ENCODE measurements at regions of chr12 and their contacts with region 1.

Region 1: DNA sequence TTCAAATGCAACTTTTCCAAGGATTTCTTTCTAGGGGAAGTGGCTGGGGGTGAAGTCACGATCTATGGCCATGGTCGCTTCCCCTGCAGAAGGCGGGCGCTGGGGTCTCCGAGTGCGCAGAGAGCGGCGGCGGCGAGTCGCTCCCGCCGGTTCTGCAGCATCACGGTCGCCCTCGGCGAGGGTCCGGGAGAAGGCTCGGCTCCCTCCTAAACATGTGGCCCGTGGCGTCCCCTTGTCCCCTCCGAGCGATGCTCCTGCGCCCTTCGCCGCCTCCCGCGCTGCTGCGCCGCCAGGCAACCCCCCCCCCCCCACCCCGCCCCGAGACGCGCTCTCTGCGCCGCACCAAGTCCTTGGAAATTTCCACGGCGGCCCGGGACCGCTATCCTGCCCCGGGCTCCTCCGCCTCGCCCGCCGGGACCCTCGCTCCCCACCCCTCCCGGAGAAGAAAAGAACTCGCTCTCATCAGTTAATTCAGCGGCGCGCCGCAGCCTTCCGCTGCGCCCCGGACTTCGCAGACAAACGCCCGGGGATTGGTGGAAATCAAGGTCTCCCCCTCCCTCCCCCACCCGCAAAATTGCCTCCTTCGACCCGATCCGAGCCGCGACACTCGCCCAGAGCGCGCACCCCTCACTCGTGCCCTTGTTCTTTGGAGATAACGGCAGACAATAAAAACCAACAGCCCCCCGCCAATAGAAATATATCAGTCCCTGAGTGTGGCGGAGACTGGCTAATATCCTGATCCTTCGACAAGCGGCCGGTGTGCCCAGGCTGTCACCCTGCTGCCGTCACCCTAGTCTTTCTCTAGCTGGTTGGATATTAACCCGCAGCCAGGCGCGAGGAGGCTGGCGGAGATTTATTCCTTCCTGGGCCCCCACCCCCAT is at the start of gene ST8SIA1:
- DNase-seq: peak; percentile 50 to 88 (median 60)
- ATAC-seq: peak; percentile 53
- H3K4me3 ChIP-seq: peak within 1 kb of the TSS; percentile 86
- H3K4me3 Mint-ChIP-seq: peak within 1 kb of the TSS; percentile 95
- H3K27ac ChIP-seq: peak within 1 kb of the TSS; percentile 45 to 74
- H3K27ac Mint-ChIP-seq: peak within 1 kb of the TSS; percentile 92
- H3K4me1 ChIP-seq: peaks cover 25% of the 10 kb centered on the region
- H3K4me1 Mint-ChIP-seq: peaks cover 52% of the 10 kb centered on the region
- H3K27me3 ChIP-seq: peaks cover 0 to 8% of the 10 kb centered on the region in 2 experiments
- H3K27me3 Mint-ChIP-seq: peaks cover 39% of the 10 kb centered on the region
- CTCF ChIP-seq: no peak
- total RNA-seq, gene ST8SIA1: 5.6 to 5.7 TPM

Region 2: DNA sequence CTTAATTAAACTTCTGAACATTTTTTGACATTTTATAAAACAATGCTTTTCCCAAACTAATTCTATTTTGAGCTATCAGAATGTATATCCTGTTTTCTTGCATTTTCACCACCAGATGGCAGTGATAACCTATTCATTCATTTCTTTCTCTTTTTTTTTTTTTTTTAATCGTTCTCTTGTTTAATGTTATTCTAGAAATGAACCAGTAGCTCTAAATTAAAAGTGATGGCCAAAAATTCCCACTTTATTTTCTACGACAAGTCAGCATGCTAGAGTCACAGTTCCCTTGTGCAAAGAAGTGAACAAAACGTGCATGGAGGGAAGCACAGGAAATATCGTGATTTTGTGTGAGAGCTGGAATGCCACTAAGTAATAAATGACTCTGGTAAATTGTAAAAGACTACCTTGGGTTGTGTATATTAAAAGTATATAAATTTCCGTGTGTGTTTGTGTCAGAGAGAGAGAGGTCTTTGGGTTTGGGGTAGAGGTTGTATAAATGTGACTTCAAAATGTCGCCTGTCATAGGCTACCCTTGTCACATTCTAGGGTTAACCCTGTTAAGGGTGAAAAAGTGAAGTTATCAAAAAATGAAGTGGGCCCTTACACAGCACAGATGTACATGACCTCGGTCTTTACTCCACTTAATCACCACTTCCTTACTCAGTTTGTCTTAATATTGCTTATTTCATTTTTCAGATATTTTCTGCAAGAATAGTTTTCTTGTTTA is 636.6 kb before region 1 on chr12:
- CTCF ChIA-PET with region 1: no interaction called
- POLR2A ChIA-PET with region 1: interaction called, 4 read pairs
- intact Hi-C with region 1: loop called in 1 of 2 experiments (anchors 10 kb)
- DNase-seq: peak in 3 of 14 experiments; percentile 50 to 69 (median 69)
- ATAC-seq: no peak
- H3K4me3 ChIP-seq: no peak overlapping the region
- H3K4me3 Mint-ChIP-seq: peak overlapping the region; percentile 27
- H3K27ac ChIP-seq: no peak overlapping the region
- H3K27ac Mint-ChIP-seq: no peak overlapping the region
- H3K4me1 ChIP-seq: peaks cover 2% of the 10 kb centered on the region
- H3K4me1 Mint-ChIP-seq: peaks cover 27% of the 10 kb centered on the region
- H3K27me3 ChIP-seq: no peaks in the 10 kb centered on the region
- H3K27me3 Mint-ChIP-seq: peaks cover 5% of the 10 kb centered on the region
- CTCF ChIP-seq: peak; percentile 80

Region 3: DNA sequence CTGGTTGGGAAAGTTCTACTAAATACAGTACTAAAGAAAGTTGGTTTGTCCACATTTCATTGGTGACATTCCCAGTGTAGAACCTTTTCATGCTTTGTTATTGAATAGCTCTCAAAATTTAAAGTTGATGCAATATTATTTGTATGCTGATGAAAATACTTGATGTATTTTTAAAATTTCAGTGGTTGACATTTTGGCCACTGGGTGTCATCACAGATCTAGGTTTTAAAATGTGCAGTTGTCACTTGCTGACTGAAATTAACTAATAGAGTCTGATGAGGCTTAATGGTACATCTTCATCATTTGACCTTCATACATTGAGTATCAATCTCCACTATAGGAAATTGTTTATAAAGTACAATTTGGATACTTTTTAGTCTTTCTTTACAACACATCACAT is 251.5 kb before region 1 on chr12:
- CTCF ChIA-PET with region 1: no interaction called
- POLR2A ChIA-PET with region 1: interaction called, 3 read pairs
- intact Hi-C with region 1: loop called (anchors 1 to 5 kb)
- DNase-seq: peak in 7 of 14 experiments; percentile 8 to 71 (median 51)
- ATAC-seq: peak; percentile 55
- H3K4me3 ChIP-seq: no peak overlapping the region
- H3K4me3 Mint-ChIP-seq: no peak overlapping the region
- H3K27ac ChIP-seq: no peak overlapping the region
- H3K27ac Mint-ChIP-seq: no peak overlapping the region
- H3K4me1 ChIP-seq: no peaks in the 10 kb centered on the region
- H3K4me1 Mint-ChIP-seq: no peaks in the 10 kb centered on the region
- H3K27me3 ChIP-seq: no peaks in the 10 kb centered on the region
- H3K27me3 Mint-ChIP-seq: no peaks in the 10 kb centered on the region
- CTCF ChIP-seq: peak; percentile 70

Region 4: DNA sequence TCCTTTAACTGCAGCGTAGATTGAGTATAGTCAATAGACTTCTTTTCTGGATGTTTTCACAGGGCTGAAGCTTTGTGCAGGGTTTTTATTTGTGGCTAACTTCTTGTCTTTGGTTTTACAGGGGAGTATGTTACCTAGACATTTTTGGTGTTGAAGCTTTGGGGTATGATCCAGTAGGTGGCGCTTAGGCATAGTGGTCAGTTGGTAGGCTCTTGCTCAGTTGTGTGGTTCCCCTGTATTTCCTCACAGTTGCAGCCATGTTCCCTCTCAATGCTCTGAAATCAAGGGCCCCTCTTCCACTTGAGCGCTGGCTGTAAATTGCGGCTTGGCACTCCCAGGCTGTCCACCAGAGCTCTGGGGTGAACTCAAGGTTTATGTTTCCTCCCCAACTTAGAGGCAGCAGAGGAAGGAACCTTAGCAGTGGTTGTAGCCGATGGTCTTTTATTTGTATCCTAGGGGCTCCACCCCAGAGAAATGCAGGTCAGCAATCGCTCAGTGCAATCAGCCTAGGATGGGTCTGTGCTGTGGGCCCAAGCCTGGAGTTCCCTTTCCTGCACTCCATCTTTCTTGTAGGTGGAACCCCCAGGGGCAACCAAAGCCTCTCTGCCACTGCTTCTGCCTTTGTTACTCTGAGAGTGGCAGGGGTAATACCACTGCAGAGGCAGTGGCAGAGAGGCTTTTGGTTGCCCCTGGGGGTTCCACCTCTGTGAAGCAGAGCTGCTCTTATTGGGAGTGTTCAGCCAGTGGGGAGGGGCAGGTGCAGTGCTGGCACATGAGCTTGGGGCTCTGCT is 233.5 kb before region 1 on chr12:
- CTCF ChIA-PET with region 1: interaction called, 5 read pairs
- POLR2A ChIA-PET with region 1: interaction called, 3 read pairs
- intact Hi-C with region 1: loop called in 1 of 2 experiments (anchors 2 kb)
- DNase-seq: peak in 9 of 14 experiments; percentile 10 to 76 (median 33)
- ATAC-seq: peak; percentile 48
- H3K4me3 ChIP-seq: no peak overlapping the region
- H3K4me3 Mint-ChIP-seq: no peak overlapping the region
- H3K27ac ChIP-seq: no peak overlapping the region
- H3K27ac Mint-ChIP-seq: no peak overlapping the region
- H3K4me1 ChIP-seq: peaks cover 15% of the 10 kb centered on the region
- H3K4me1 Mint-ChIP-seq: peaks cover 14% of the 10 kb centered on the region
- H3K27me3 ChIP-seq: no peaks in the 10 kb centered on the region
- H3K27me3 Mint-ChIP-seq: no peaks in the 10 kb centered on the region
- CTCF ChIP-seq: peak; percentile 66

Region 5: GRCh38 chr12:22366181-22366580 is 31.5 kb after region 1 on chr12:
- CTCF ChIA-PET with region 1: no interaction called
- POLR2A ChIA-PET with region 1: no interaction called
- intact Hi-C with region 1: no loop called
- DNase-seq: no peak
- ATAC-seq: no peak
- H3K4me3 ChIP-seq: no peak overlapping the region
- H3K4me3 Mint-ChIP-seq: no peak overlapping the region
- H3K27ac ChIP-seq: no peak overlapping the region
- H3K27ac Mint-ChIP-seq: no peak overlapping the region
- H3K4me1 ChIP-seq: no peaks in the 10 kb centered on the region
- H3K4me1 Mint-ChIP-seq: no peaks in the 10 kb centered on the region
- H3K27me3 ChIP-seq: no peaks in the 10 kb centered on the region
- H3K27me3 Mint-ChIP-seq: no peaks in the 10 kb centered on the region
- CTCF ChIP-seq: no peak

Region 6: DNA sequence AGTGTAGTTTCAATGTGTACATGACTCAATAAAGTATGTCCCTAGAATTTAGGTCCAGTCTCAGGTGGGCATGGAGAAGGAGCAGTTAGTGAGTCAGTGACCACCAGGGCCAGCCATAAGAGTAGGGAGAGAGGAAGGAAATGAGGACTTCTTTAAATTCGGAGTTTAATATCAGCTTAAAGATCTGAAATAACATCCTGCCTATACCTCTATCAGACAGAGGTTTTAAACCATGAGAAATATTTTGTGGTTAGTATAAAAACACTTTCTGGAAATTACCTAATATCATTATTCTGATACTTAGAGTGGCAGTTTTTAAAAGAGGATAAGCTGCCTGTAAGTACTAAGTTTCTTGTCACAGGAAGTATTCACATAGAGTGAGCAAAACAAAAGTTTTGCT is 61.6 kb after region 1 on chr12:
- CTCF ChIA-PET with region 1: interaction called, 6 read pairs
- POLR2A ChIA-PET with region 1: interaction called, 25 read pairs
- intact Hi-C with region 1: loop called in 1 of 2 experiments (anchors 5 kb)
- DNase-seq: peak in 8 of 14 experiments; percentile 7 to 78 (median 30)
- ATAC-seq: peak; percentile 84
- H3K4me3 ChIP-seq: no peak overlapping the region
- H3K4me3 Mint-ChIP-seq: peak overlapping the region; percentile 80
- H3K27ac ChIP-seq: peak overlapping the region; percentile 66 to 75
- H3K27ac Mint-ChIP-seq: peak overlapping the region; percentile 85
- H3K4me1 ChIP-seq: peaks cover 28% of the 10 kb centered on the region
- H3K4me1 Mint-ChIP-seq: peaks cover 42% of the 10 kb centered on the region
- H3K27me3 ChIP-seq: no peaks in the 10 kb centered on the region
- H3K27me3 Mint-ChIP-seq: no peaks in the 10 kb centered on the region
- CTCF ChIP-seq: no peak

Region 7: DNA sequence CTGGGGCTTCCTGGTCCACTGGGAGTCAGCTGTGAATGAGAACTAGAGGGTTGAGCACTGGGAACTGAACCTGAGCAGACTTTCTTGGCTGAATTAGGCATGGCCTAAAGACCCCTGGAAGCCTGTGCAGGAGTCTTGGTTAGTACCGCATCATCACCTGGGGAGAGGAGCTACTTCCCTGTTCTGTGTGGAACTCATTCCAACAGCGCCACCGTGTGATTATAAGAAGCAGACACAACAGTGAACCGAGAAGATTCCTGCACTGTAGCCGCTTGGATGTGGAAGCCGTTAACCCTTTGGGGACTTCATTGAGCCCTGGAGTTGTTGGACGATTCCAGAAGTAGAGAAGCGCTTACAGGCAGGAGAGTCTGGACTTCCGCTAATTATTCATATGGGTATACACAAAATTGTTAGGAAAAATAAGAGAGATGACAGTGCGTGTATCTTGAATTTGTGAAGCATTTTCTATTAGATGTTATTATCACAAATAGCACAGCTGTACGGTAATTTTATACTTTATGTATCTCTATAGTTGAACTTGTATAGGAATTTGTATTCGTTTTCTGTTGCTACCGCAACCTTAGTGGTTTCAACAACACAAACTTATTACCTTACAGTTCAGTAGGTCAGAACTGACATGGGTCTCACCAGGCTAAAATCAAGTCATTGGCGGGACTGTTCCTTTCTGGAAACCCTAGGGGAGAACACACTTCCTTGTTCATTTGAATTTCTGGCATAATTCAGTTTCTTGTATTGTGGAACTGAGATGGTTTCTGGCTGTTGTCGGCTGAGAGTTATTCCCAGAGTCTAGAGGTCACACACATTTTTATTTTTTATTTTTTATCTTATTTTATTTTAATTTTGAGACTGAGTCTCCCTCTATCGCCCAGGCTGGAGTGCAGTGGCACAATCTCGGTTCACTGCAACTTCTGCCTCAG is 109.0 kb after region 1 on chr12:
- CTCF ChIA-PET with region 1: interaction called, 11 read pairs
- POLR2A ChIA-PET with region 1: interaction called, 7 read pairs
- intact Hi-C with region 1: loop called (anchors 2 to 5 kb)
- DNase-seq: peak; percentile 24 to 88 (median 48)
- ATAC-seq: peak; percentile 99
- H3K4me3 ChIP-seq: no peak overlapping the region
- H3K4me3 Mint-ChIP-seq: no peak overlapping the region
- H3K27ac ChIP-seq: no peak overlapping the region
- H3K27ac Mint-ChIP-seq: no peak overlapping the region
- H3K4me1 ChIP-seq: peaks cover 6% of the 10 kb centered on the region
- H3K4me1 Mint-ChIP-seq: peaks cover 6% of the 10 kb centered on the region
- H3K27me3 ChIP-seq: no peaks in the 10 kb centered on the region
- H3K27me3 Mint-ChIP-seq: no peaks in the 10 kb centered on the region
- CTCF ChIP-seq: peak; percentile 85

Measured in CD4-positive, alpha-beta T cell (primary cell).